Activated naive CD8-positive, alpha-beta T cell treated with anti-CD3 and anti-CD28 coated beads, Interleukin-2, amount 10 ng/mL, durations not matched to agents 7 days and 5 days (primary cell): ENCODE measurements at regions of chr17 and their contacts with region 1.

Region 1: DNA sequence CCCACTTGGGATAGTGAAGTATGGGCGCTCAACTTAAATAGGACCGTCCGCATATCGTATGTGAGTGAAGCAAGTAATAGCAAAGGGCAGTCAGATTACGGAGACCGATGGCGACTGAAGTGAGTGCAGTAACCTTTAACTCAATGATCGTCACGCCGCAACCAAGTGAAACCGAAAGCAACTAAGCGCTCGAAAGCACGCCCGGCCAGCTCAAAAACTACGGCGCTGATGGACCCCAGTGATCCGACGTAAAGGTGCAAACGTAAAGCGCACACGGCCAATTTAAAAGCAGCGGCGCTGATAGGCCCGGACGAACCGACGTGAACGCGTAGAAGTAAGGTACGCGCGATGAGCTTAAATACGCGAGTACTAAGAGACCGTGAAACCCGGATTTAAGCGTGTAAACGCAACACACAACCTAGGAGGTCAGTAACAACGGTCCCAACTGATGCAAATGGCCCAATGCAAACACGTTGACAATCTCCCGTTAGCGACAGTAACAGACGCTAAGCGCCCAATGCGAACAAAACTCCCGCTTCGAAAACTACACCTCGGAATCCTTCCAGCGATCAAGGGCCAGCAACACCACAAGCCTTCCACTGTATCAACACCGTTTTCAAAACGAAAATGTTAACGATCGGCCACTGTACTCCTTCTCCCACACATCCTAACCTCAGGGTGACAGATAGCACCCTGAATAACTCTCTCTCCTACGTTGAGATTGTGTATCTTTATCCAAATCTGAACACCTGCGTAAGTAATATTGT is 37.9 kb upstream of the ARL4D start:
- DNase-seq: peak; percentile 85
- ATAC-seq: peak; percentile 88
- H3K4me3 Mint-ChIP-seq: peak overlapping the region; percentile 93
- H3K27ac Mint-ChIP-seq: peak overlapping the region; percentile 100
- H3K4me1 Mint-ChIP-seq: peaks cover 27% of the 10 kb centered on the region
- H3K27me3 Mint-ChIP-seq: no peaks in the 10 kb centered on the region

Region 2: DNA sequence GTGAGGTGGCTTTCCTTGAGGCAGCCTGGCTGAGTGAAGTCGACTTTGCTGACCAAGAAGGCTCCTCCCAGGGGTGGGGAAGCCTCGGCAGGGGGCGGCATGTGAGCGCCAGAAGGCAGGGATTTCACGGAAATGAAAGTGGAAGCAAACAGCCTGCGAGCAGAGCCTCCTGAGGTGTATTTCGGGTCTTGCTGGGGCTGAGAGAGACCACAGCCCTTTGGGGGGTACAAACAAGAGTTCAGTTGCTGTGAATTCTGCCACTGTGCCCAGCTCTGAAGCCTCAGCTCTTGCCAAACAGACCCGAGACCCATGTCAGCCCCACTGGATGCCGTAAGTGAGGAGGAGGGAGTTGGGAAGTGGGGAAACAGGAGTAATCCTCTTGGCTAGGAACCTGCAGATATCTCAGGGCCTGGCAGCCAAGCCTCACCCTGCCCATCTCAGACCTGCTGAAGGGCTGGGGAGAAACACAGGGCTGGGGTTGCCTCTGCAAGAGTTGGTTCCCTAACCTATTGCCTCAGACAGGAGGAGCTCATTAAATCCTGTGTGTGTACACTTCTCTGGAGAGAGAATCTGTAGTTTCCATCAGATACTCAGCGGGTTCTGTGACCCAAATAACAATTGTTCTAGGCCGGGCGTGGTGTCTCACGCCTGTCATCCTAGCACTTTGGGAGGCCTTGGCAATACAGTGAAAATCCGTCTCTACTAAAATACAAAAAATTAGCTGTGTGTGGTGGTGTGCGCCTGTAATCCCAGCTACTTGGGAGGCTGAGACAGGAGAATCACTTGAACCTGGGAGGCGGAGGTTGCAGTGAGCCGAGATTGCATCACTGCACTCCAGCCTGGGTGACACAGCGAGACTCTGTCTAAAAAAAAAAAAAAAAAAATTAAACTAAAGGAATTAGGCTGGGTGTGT is 354.0 kb before region 1 on chr17 and contains the start of gene IFI35:
- POLR2A ChIA-PET with region 1: interaction called, 10 read pairs
- DNase-seq: peak; percentile 83
- ATAC-seq: peak; percentile 98
- H3K4me3 Mint-ChIP-seq: peak within 1 kb of the TSS; percentile 100
- H3K27ac Mint-ChIP-seq: peak within 1 kb of the TSS; percentile 100
- H3K4me1 Mint-ChIP-seq: peaks cover 23% of the 10 kb centered on the region
- H3K27me3 Mint-ChIP-seq: no peaks in the 10 kb centered on the region
- total RNA-seq, gene IFI35: 92.7 to 99.2 TPM

Region 3: DNA sequence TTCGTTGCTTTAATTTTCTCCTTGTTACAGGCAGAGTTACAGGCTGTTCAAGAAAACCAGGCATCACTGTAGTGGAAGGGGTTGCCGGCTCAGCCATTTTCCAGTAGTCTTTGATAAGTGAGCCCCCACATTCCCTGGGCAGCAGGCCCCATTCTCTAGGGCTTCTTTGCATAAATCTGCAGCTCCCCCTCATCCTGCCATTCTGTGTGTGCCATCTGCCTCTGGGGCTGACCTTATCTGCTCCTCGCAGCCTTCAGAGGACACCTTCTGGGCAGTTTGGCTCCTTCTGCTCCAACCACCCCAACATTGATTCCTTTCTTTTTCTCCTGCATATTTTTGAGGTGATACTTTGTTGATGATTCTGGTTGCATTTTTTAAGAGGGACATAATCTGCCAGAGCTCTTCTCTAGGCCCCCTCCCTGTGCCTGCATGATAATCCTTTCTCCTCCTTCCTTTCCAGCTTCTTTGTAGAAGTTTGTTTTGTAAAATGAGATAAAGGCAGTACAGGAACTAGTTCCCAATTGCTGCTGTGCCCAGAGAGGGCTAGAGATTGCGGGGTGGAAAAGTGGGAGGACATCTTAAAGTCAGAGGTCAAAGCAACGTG is 318.8 kb before region 1 on chr17:
- POLR2A ChIA-PET with region 1: no interaction called
- DNase-seq: no peak
- ATAC-seq: no peak
- H3K4me3 Mint-ChIP-seq: no peak overlapping the region
- H3K27ac Mint-ChIP-seq: peak overlapping the region; percentile 17
- H3K4me1 Mint-ChIP-seq: no peaks in the 10 kb centered on the region
- H3K27me3 Mint-ChIP-seq: no peaks in the 10 kb centered on the region

Region 4: DNA sequence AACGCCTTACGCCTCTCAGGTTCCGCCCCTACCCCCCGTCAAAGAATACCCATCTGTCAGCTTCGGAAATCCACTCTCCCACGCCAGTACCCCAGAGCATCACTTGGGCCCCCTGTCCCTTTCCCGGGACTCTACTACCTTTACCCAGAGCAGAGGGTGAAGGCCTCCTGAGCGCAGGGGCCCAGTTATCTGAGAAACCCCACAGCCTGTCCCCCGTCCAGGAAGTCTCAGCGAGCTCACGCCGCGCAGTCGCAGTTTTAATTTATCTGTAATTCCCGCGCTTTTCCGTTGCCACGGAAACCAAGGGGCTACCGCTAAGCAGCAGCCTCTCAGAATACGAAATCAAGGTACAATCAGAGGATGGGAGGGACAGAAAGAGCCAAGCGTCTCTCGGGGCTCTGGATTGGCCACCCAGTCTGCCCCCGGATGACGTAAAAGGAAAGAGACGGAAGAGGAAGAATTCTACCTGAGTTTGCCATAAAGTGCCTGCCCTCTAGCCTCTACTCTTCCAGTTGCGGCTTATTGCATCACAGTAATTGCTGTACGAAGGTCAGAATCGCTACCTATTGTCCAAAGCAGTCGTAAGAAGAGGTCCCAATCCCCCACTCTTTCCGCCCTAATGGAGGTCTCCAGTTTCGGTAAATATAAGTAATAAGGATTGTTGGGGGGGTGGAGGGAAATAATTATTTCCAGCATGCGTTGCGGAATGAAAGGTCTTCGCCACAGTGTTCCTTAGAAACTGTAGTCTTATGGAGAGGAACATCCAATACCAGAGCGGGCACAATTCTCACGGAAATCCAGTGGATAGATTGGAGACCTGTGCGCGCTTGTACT is 235.6 kb before region 1 on chr17 and contains the start of gene BRCA1:
- POLR2A ChIA-PET with region 1: interaction called, 17 read pairs
- DNase-seq: peak; percentile 89
- ATAC-seq: peak; percentile 99
- H3K4me3 Mint-ChIP-seq: peak within 1 kb of the TSS; percentile 97
- H3K27ac Mint-ChIP-seq: peak within 1 kb of the TSS; percentile 98
- H3K4me1 Mint-ChIP-seq: peaks cover 25% of the 10 kb centered on the region
- H3K27me3 Mint-ChIP-seq: no peaks in the 10 kb centered on the region
- total RNA-seq, gene BRCA1: 53.5 to 61.4 TPM

Region 5: DNA sequence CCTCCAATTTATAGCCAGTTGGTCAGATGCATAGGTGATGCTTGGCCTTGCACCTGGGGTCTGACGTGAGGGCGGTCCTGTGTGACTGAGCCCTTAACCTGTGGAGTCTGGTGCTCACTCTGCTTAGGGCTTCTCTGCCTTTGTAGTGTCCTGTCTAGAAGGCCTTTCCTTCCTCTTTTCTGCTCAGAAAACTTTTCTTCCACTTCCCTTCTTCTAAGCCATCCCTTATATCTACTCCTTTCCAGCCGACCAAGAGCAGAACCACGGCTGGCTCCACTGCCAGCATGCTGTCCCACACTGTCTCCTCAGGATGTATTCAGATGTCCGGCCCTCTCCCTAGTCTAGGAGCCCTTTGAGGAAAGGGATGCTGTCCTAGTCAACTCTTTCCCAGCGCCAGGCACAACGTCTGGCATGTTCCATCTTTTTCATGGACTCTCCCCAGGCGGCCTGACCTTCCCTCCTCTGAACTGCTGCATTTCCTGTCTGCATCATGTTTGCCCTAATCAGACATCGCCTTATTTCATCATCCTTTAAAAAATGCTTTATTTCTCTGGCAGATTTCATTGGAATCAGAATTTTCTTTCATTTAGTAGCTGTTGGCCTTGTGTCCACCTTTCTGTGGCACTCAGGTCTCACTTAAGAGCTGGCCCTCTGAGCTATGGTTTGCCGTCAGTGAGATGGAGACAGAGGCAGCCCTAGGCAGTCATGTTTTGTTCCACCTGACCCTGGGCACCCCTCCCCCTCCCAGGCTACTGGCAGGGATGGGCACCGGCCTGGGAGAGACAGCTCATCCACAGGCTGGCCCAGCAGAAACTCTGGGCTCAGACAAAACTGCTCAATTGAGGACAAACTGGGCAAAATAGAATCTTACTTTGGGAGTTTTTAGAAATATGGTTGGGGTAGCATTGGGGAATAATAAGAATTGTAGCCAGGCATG is 220.3 kb before region 1 on chr17:
- POLR2A ChIA-PET with region 1: no interaction called
- DNase-seq: no peak
- ATAC-seq: no peak
- H3K4me3 Mint-ChIP-seq: no peak overlapping the region
- H3K27ac Mint-ChIP-seq: no peak overlapping the region
- H3K4me1 Mint-ChIP-seq: peaks cover 10% of the 10 kb centered on the region
- H3K27me3 Mint-ChIP-seq: no peaks in the 10 kb centered on the region

Region 6: DNA sequence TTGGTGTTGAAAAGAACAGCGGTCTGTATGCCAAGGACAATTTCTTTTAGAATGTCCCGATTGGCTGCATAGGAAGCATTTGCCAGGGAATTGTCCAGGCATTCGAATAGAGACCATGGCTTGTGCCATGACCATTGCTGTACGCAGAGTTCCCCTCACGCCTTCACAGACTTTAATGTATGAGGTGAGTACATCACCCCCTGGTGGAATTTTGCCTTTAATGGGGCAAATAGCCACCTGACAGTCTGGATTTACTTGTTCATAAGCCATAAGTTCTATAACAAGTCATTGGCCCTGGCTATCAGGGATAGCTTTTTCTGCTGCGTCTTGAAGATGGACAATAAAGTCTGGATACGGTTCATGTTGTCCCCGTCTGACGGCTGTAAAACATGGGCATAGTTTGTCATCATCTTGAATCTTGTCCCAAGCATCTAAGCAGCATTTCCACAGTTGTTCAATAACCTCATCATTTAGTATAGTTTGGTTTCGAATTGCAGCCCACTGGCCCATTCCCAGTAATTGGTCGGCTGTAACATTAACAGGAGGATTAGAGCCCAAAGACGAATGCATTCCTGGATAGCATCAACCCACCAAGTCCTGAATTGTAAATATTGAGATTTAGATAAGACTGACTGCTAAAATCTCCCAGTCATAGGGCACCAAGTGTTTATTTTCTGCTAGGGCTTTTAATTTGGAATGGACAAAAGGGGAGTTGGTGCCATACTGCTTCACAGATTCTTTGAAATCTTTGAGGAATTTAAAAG is 29.9 kb before region 1 on chr17:
- POLR2A ChIA-PET with region 1: interaction called, 37 read pairs
- DNase-seq: no peak
- ATAC-seq: no peak
- H3K4me3 Mint-ChIP-seq: no peak overlapping the region
- H3K27ac Mint-ChIP-seq: no peak overlapping the region
- H3K4me1 Mint-ChIP-seq: peaks cover 8% of the 10 kb centered on the region
- H3K27me3 Mint-ChIP-seq: peaks cover 21% of the 10 kb centered on the region

Region 7: GRCh38 chr17:43393944-43394482 is 33.1 kb after region 1 on chr17:
- POLR2A ChIA-PET with region 1: interaction called, 168 read pairs
- DNase-seq: peak; percentile 77
- ATAC-seq: peak; percentile 49
- H3K4me3 Mint-ChIP-seq: no peak overlapping the region
- H3K27ac Mint-ChIP-seq: peak overlapping the region; percentile 18
- H3K4me1 Mint-ChIP-seq: peaks cover 19% of the 10 kb centered on the region
- H3K27me3 Mint-ChIP-seq: no peaks in the 10 kb centered on the region

Region 8: DNA sequence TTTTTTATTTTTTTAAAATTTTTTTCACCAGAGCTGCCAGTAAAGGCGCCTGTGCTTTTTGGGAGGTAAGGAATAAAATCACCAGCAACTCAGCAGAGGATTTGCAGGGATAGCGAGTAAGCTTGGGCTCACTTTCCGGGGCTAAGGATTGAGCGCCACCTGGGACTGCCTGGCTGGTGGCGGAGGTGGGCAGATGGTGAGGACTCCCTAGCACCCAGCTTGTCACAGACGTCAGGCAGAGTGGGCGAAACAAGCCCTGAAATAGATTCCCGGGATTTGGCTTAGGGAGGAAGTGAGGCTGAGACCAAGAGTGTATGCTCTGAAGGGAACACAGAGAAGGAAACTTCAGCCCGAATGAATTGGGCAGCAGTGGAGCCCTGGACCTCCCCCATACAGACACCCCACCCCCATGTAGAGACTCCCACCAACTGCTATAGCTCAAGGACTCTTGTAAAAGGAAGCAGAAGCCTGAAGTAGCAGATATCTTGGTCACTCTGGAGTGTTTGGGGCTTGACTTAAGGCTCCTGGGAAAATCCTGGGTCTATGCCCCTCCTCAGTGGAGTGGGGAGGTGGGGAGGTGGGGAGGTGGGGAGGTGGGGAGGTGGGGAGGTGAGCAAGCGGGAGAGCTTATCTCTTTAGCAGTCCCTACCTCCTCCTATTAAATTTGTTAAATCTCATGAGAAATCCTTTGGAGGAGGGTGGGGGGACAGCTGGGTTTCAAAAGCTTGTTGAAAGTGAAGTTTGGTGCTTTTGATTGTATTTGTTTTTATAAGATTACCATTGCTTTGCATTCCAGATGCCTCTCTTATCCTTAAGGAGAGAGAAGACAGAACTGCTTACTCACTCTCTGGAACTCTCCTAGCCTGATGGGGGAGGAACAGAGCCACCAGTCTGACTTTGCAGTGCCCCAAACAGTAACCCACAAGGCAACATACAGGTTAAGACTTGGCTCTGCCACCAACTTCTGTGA is 46.0 kb after region 1 on chr17:
- POLR2A ChIA-PET with region 1: no interaction called
- DNase-seq: no peak
- ATAC-seq: no peak
- H3K4me3 Mint-ChIP-seq: no peak overlapping the region
- H3K27ac Mint-ChIP-seq: no peak overlapping the region
- H3K4me1 Mint-ChIP-seq: peaks cover 1% of the 10 kb centered on the region
- H3K27me3 Mint-ChIP-seq: peaks cover 14% of the 10 kb centered on the region

Region 9: GRCh38 chr17:43861024-43861621 is 500.2 kb after region 1 on chr17:
- POLR2A ChIA-PET with region 1: no interaction called
- DNase-seq: no peak
- ATAC-seq: no peak
- H3K4me3 Mint-ChIP-seq: no peak overlapping the region
- H3K27ac Mint-ChIP-seq: no peak overlapping the region
- H3K4me1 Mint-ChIP-seq: no peaks in the 10 kb centered on the region
- H3K27me3 Mint-ChIP-seq: peaks cover 17% of the 10 kb centered on the region